HAP-1 (cell line): ENCODE measurements at regions of chr10 and their contacts with region 1.

Region 1: GRCh38 chr10:12264204-12264940 is 68.4 kb downstream of the CDC123 start:
- DNase-seq: peak; percentile 91 to 92
- H3K4me3 ChIP-seq: peak overlapping the region; percentile 4; the same call in 1 of the 2 replicates
- H3K4me1 ChIP-seq: peaks cover 3% of the 10 kb centered on the region
- H3K27me3 ChIP-seq: no peaks in the 10 kb centered on the region

Region 2: GRCh38 chr10:12876266-12876665 is 611.9 kb after region 1 on chr10:
- in situ Hi-C with region 1: no loop called
- DNase-seq: no peak
- H3K4me3 ChIP-seq: no peak overlapping the region
- H3K4me1 ChIP-seq: no peaks in the 10 kb centered on the region
- H3K27me3 ChIP-seq: no peaks in the 10 kb centered on the region

Region 3: DNA sequence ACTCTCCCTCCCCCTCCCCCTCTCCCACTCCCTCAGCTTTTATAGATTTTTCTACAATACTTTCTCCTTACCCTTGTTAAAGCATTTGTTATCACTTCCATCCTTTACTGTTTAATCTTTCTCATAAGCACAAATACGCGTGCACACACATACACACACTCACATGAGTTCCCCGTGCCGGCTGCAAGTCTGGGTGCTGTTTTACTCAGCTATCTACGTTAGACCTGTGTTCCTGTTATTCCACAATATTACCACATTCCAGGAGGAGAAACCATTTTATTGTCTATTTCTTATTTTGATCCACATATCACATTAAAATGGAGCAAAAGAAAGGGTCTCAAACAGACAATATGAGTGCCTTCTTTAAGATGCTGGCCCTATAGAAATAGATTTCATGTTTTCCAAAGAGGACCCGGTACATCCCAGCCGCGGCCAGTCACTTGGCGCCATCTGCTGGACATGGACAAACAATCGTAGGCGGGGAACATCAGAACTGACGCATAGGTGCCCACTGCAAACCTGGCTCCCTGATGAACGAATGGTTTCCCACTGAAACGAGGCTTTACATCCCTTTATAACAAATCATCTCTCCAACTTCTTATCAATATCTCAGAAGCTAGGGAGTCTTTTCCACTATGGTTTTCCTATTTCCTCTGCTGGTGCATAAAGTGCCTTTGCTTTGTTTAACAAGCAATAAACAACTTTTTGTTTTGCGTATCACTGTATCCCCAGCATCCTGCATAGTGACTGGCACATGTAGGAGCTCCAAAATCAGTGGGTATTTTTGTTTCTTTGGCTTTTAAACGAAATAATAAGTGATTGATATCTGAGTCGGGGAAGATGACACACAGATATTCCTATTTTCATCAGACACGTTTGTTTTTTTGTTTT is 810.4 kb after region 1 on chr10:
- in situ Hi-C with region 1: loop called (anchors 25 kb)
- DNase-seq: peak; percentile 72 to 83
- H3K4me3 ChIP-seq: no peak overlapping the region
- H3K4me1 ChIP-seq: no peaks in the 10 kb centered on the region
- H3K27me3 ChIP-seq: peaks cover 4% of the 10 kb centered on the region